ENCODE measurements at regions of chr7 and their contacts with region 1.

Region 1: DNA sequence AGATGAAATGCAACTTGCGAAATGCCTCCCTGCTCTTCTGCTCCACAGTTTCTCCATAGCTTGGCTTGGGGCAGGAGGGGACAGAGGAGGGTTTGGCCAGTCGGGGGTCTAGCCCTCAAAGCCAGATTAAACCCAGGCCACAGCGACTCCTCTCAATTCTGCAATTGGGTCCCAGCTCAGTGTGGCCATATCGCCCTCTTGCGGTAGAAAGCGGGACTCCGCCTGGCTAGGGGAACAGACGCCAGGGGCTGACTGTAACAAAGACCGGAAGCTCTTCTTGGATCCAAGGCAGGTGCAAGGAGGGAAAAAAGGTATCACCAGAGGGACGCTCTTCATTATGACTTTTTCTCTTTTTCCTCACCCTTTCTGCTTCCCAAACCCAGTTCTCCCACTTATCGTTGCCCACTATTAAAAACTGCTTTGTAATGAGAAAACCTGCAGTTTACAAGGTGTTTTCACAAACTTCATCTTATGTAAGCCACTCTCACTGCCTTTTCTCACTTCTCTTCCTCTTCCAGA is 36.6 kb upstream of the TNPO3 start:
- DNase-seq: peak; percentile 82
- H3K4me3 Mint-ChIP-seq: no peak overlapping the region
- H3K27ac Mint-ChIP-seq: no peak overlapping the region
- H3K4me1 Mint-ChIP-seq: peaks cover 5% of the 10 kb centered on the region
- H3K27me3 Mint-ChIP-seq: peaks cover 10% of the 10 kb centered on the region
- CTCF ChIP-seq: peak; percentile 96

Region 2: DNA sequence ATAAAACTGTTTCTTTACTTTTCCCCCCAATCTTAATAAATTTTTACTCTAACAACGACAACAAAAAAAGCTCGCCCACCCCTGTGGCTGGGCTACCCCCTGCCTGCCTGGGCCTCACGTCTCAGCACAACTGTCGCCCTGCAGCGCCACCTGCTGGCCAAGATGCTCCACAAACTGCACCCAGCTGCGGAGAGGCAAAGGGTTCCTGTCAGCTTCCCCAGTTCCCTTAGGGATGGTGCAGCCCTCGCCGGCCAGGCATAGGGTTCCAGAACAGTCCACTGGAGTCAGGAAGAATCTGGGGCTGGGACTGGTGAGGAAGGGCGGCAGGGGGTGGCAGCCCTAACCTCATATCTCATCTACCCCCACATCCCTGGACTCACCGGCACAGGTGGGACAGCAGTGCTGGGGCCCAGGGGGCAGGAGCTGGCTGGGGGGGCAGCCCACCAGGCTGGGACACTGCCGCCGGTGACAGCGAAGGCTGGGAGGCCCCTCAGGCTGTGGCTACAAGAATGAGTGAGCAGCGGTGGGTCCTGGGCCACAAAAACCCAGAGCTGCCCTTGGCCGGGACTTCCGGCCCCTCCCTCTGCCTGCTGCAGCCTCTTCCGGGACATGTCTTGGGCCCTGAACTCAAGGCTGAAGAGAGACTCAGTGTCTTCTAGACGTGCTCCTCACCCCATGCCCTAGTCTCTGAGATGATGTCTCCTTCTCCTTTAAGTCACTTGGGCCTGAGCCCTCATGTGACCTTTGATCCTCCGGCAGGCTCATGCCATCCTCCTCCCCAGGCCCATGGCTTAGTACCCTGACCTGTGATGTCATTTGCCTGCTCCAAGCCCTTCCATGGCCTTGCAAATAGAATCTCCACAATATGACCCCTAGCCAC is 207.7 kb before region 1 on chr7:
- CTCF ChIA-PET with region 1: interaction called, 7 read pairs
- POLR2A ChIA-PET with region 1: no interaction called
- intact Hi-C with region 1: loop called (anchors 1 kb)
- DNase-seq: peak; percentile 76
- H3K4me3 Mint-ChIP-seq: no peak overlapping the region
- H3K27ac Mint-ChIP-seq: no peak overlapping the region
- H3K4me1 Mint-ChIP-seq: no peaks in the 10 kb centered on the region
- H3K27me3 Mint-ChIP-seq: no peaks in the 10 kb centered on the region
- CTCF ChIP-seq: peak; percentile 90

Region 3: DNA sequence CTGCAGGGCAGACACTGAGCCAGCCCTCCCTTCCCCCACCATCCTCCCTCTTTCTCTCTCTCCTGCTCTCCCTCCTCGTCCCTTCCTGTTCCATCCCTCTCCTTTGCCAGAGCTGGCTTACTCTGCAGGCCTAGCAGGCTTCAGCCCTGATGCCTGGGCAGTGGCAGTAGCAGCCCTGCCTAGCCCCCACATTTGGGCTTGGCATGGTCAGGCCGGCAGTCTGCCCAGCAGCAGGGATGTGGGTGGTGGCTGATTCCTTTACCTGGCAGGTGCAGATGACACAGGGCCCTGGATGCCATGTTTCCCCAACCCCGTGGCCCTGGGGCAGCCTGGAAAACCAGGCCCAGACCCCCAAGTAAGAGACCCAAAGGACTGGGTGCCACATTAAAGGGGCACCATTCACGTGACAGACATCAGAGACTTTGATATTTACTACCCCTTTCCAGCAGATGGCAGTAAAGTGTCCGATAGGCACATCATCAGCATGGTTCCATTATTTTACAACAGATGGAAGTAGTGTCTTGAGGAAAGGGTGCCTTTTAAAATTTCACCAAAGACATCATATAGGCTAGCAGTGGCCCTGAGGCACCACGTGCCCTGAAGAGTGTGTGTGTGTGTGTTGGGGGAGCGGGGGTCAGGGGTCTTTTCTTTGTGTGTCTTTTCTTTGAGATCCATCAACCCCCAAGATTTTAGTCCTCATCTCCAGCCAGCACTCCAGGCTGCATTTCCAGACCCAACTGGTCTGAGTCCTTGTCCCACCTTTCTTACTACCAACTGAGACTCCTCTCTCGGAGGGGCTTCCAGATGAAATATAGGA is 187.0 kb before region 1 on chr7:
- CTCF ChIA-PET with region 1: interaction called, 18 read pairs
- POLR2A ChIA-PET with region 1: no interaction called
- intact Hi-C with region 1: loop called (anchors 1 kb)
- DNase-seq: peak; percentile 71
- H3K4me3 Mint-ChIP-seq: no peak overlapping the region
- H3K27ac Mint-ChIP-seq: no peak overlapping the region
- H3K4me1 Mint-ChIP-seq: peaks cover 9% of the 10 kb centered on the region
- H3K27me3 Mint-ChIP-seq: peaks cover 12% of the 10 kb centered on the region
- CTCF ChIP-seq: peak; percentile 59

Region 4: GRCh38 chr7:129054438-129055293 is 36.9 kb before region 1 on chr7 and contains the start of gene TNPO3:
- CTCF ChIA-PET with region 1: interaction called, 15 read pairs
- POLR2A ChIA-PET with region 1: interaction called, 13 read pairs
- intact Hi-C with region 1: no loop called
- DNase-seq: peak; percentile 94
- H3K4me3 Mint-ChIP-seq: peak within 1 kb of the TSS; percentile 97
- H3K27ac Mint-ChIP-seq: peak within 1 kb of the TSS; percentile 100
- H3K4me1 Mint-ChIP-seq: peaks cover 2% of the 10 kb centered on the region
- H3K27me3 Mint-ChIP-seq: peaks cover 13% of the 10 kb centered on the region
- CTCF ChIP-seq: no peak
- total RNA-seq, gene TNPO3: 42.3 and 44.2 TPM in 2 replicates

Region 5: DNA sequence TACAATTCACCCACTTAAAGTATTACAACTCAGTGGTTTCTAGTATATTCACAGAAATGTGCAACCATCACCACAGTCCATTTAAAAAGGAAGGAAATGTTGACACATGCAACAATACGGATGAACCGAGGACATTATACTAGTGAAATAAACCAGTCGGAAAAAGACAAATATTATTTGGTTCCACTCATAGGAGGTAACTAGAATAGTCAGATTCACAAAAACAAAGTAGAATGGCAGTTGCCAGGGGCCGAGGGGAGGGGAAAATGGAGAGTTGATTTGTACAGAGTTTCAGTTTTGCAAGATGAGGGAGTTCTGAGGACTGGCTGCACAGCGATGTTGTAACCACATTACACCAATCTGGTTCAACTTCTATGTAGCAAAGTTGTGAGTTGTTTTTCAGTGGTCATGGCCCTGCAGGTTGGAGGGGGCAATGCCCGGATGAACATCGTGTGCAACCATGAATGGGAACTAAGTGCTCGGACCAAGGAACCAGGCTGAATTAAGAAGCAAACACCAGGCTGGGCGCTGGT is 19.0 kb before region 1 on chr7:
- CTCF ChIA-PET with region 1: interaction called, 22 read pairs
- POLR2A ChIA-PET with region 1: no interaction called
- intact Hi-C with region 1: no loop called
- DNase-seq: no peak
- H3K4me3 Mint-ChIP-seq: no peak overlapping the region
- H3K27ac Mint-ChIP-seq: no peak overlapping the region
- H3K4me1 Mint-ChIP-seq: no peaks in the 10 kb centered on the region
- H3K27me3 Mint-ChIP-seq: peaks cover 18% of the 10 kb centered on the region
- CTCF ChIP-seq: no peak

Region 6: GRCh38 chr7:129101746-129102145 is 10.2 kb after region 1 on chr7:
- CTCF ChIA-PET with region 1: interaction called, 25 read pairs
- POLR2A ChIA-PET with region 1: interaction called, 3 read pairs
- intact Hi-C with region 1: no loop called
- DNase-seq: no peak
- H3K4me3 Mint-ChIP-seq: no peak overlapping the region
- H3K27ac Mint-ChIP-seq: no peak overlapping the region
- H3K4me1 Mint-ChIP-seq: no peaks in the 10 kb centered on the region
- H3K27me3 Mint-ChIP-seq: no peaks in the 10 kb centered on the region
- CTCF ChIP-seq: no peak

Region 7: DNA sequence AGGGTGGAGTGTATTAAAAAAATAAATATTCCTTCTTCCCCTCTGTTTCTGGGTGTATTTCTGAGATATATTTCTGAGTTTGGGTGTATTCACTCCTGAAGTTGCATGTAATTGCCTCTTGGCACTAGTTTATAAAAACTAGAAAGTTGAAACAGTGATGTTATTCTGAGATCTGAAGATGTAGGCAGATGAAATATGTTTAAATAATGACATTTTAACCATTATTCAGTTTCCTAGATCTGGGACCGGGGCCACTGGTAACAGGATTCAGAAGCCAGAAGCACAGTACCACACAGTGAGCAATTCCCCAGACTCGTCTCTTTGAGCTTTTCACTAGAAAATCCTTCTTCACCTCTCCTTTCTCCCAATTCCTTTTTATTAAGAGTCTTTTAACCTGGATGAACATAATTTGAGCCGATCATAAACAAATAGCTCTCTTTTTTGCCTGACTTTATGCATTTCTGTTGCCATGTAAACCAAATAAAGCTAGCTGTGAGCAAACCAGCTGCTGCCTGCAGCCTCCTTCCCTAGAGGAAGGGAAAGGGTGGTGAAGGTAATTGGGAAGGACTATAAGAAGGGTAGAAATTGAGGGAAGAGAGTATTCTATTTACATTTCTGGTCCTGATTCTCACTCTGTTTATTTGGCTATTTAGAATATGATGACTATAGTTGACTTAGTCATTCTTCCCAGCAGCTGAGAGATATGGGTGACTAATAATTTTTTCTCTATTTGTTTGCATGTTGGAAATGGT is 240.9 kb after region 1 on chr7:
- CTCF ChIA-PET with region 1: no interaction called
- POLR2A ChIA-PET with region 1: no interaction called
- intact Hi-C with region 1: no loop called
- DNase-seq: peak; percentile 21
- H3K4me3 Mint-ChIP-seq: no peak overlapping the region
- H3K27ac Mint-ChIP-seq: no peak overlapping the region
- H3K4me1 Mint-ChIP-seq: peaks cover 7% of the 10 kb centered on the region
- H3K27me3 Mint-ChIP-seq: no peaks in the 10 kb centered on the region
- CTCF ChIP-seq: no peak